Endothelial cell of umbilical vein (primary cell): ENCODE measurements at regions of chr4 and their contacts with region 1.

Region 1: DNA sequence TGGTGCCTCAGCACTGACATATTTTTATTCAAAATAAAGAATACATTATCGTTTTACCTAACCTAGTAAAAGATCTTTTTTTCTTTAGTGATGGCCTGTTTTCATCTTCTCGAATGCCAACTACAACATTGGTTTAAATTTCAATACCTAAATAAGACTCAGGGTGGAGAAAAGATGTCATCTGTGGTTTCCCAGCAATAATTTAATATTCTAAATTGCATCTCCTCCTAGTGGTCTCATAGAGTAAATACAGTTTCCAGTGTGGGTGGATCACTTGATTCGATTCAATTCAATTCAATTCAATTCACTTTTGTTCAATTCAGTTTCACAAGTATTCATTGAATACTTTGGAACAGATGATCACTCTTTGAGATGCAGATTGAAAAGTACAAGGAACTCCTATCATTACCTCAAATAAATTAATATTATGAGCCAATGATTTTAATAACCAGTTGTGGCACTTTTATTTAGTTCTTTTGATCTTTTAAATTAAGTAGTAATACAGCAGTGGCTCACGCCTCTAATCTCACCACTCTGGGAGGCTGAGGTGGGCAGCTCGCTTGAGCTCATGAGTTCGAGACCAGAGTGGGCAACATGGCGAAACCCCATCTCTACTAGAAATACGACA is 427.2 kb downstream of the FAT4 start:
- DNase-seq: peak; percentile 61
- H3K4me3 ChIP-seq: no peak overlapping the region
- H3K27ac ChIP-seq: peak overlapping the region; percentile 96
- H3K4me1 ChIP-seq: peaks cover 33% of the 10 kb centered on the region
- H3K27me3 ChIP-seq: no peaks in the 10 kb centered on the region
- CTCF ChIP-seq: peak; percentile 49 to 50
- POLR2A ChIP-seq: no peak

Region 2: GRCh38 chr4:124432500-124432899 is 1309.4 kb before region 1 on chr4:
- CTCF ChIA-PET with region 1: no interaction called
- POLR2A ChIA-PET with region 1: no interaction called
- dilution Hi-C with region 1: no loop called
- intact Hi-C with region 1: loop called (anchors 1 kb)
- DNase-seq: peak; percentile 94
- H3K4me3 ChIP-seq: peak overlapping the region in 1 of 3 experiments; percentile 24
- H3K27ac ChIP-seq: peak overlapping the region; percentile 100
- H3K4me1 ChIP-seq: peaks cover 75% of the 10 kb centered on the region
- H3K27me3 ChIP-seq: no peaks in the 10 kb centered on the region
- CTCF ChIP-seq: no peak
- POLR2A ChIP-seq: no peak

Region 3: GRCh38 chr4:125420526-125420925 is 321.4 kb before region 1 on chr4:
- CTCF ChIA-PET with region 1: no interaction called
- POLR2A ChIA-PET with region 1: no interaction called
- dilution Hi-C with region 1: no loop called
- intact Hi-C with region 1: loop called (anchors 5 kb)
- DNase-seq: no peak
- H3K4me3 ChIP-seq: no peak overlapping the region
- H3K27ac ChIP-seq: no peak overlapping the region
- H3K4me1 ChIP-seq: peaks cover 7% of the 10 kb centered on the region
- H3K27me3 ChIP-seq: no peaks in the 10 kb centered on the region
- CTCF ChIP-seq: no peak
- POLR2A ChIP-seq: no peak

Region 4: DNA sequence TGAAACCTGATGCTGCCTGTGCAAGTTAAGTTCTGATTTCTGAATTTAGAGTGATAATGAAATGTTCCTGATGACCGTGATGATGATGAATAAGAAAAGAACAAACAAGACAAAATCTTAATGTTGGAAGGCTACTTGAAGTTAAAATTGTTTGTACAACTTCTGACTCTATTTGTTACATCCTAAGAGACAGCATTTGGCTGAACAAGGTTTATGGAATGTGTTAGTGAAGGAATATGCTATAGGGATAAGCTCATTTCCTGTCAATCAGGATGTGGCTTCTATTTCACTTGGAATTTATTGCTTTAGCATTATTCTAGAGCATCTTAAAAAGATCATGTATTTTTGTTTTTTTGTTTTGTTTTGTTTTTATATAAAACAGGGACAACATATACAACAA is 159.6 kb before region 1 on chr4:
- CTCF ChIA-PET with region 1: interaction called, 3 read pairs
- POLR2A ChIA-PET with region 1: no interaction called
- dilution Hi-C with region 1: no loop called
- intact Hi-C with region 1: loop called (anchors 2 kb)
- DNase-seq: peak; percentile 55
- H3K4me3 ChIP-seq: no peak overlapping the region
- H3K27ac ChIP-seq: peak overlapping the region; percentile 57
- H3K4me1 ChIP-seq: peaks cover 11% of the 10 kb centered on the region
- H3K27me3 ChIP-seq: no peaks in the 10 kb centered on the region
- CTCF ChIP-seq: no peak
- POLR2A ChIP-seq: no peak

Region 5: DNA sequence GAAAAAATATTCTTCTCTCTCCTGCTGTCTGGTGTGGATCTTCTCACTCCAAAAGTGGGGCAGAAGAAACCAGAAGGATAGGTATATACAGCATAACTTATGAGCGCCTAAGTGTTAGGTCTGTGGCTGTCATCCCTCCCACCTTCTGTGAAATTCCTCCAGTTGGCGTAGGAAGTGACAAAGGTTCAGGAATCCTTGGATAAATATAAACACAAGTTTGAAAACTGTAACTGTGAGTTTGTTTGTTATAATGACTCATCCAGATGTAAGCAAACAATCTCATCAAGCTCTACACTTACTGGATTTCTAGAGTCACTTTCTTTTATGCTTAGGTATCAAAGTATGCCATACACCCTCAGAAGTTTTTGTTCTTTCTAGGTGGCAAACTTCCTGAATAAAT is 22.0 kb before region 1 on chr4:
- CTCF ChIA-PET with region 1: interaction called, 10 read pairs
- POLR2A ChIA-PET with region 1: no interaction called
- dilution Hi-C with region 1: no loop called
- intact Hi-C with region 1: loop called (anchors 1 kb)
- DNase-seq: peak; percentile 55
- H3K4me3 ChIP-seq: no peak overlapping the region
- H3K27ac ChIP-seq: peak overlapping the region; percentile 43
- H3K4me1 ChIP-seq: peaks cover 10% of the 10 kb centered on the region
- H3K27me3 ChIP-seq: no peaks in the 10 kb centered on the region
- CTCF ChIP-seq: no peak
- POLR2A ChIP-seq: no peak

Region 6: DNA sequence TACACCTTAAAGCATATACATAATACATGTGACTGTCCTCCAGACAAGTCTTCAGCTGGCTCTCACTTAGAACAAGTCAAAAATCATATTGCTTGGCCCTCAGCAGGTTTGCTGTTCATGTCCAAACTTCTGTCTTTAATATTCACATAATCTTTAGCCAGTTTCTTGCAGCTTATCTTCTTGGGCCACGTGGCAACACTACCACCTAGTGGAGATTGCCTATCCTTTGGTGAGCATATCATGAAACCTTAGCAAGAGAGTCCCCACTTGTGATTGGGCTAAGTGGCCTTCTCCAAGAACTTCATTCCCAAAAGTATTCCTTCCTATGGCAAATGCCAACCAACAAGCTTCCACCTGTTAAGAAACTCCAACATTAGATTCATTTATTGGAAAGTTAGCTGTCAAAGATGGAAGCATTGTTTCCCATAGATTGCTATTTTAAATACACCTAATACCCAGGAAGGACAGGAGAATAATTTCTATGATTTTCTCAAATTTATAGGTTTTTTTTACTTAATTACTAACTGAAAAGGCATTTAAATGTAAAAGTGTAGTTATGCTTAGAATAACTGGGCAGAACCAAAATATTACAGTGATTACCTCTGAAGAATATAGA is 1658.9 kb after region 1 on chr4:
- CTCF ChIA-PET with region 1: no interaction called
- POLR2A ChIA-PET with region 1: no interaction called
- dilution Hi-C with region 1: no loop called
- intact Hi-C with region 1: loop called (anchors 5 kb)
- DNase-seq: peak; percentile 68
- H3K4me3 ChIP-seq: no peak overlapping the region
- H3K27ac ChIP-seq: no peak overlapping the region
- H3K4me1 ChIP-seq: no peaks in the 10 kb centered on the region
- H3K27me3 ChIP-seq: no peaks in the 10 kb centered on the region
- CTCF ChIP-seq: peak; percentile 59 to 69
- POLR2A ChIP-seq: no peak